MCF 10A (cell line): ENCODE measurements at regions of chr1 and their contacts with region 1.

Region 1: DNA sequence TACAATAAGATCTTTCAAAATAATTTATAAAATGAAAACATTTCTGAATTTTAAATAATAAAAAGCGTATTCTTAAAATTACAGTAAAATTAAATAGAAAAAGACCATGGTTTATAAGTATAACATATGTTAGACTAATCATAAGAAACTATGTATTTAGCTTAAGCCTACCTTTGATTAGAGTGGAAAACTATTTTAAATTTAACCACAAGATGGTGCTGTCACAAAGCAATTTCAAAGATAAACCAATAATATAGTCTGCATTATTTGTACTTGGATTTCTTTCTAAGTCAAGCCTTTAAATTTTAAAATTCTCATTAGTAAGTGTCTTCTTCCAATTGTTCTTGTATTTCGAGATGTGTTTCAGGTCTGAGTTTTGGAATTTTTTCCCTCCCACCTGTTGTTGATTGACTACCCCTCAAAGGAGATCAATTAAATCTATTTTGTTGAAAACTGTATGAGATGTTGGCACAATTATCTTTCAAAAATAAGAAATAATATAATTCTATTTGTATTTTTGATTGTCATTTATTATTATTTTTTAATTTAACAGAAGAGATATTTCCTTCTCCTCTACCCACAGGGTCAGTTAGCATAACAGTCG is 459.8 kb downstream of the KCNT2 start:
- DNase-seq: peak; percentile 69
- H3K4me3 Mint-ChIP-seq: no peak overlapping the region
- H3K27ac Mint-ChIP-seq: no peak overlapping the region
- H3K4me1 Mint-ChIP-seq: no peaks in the 10 kb centered on the region
- H3K27me3 Mint-ChIP-seq: no peaks in the 10 kb centered on the region
- CTCF ChIP-seq: peak; percentile 68

Region 2: GRCh38 chr1:196063293-196063692 is 85.2 kb before region 1 on chr1:
- CTCF ChIA-PET with region 1: no interaction called
- POLR2A ChIA-PET with region 1: no interaction called
- intact Hi-C with region 1: no loop called
- DNase-seq: peak; percentile 78
- H3K4me3 Mint-ChIP-seq: no peak overlapping the region
- H3K27ac Mint-ChIP-seq: no peak overlapping the region
- H3K4me1 Mint-ChIP-seq: peaks cover 7% of the 10 kb centered on the region
- H3K27me3 Mint-ChIP-seq: no peaks in the 10 kb centered on the region
- CTCF ChIP-seq: no peak

Region 3: GRCh38 chr1:196160066-196160795 is 11.8 kb after region 1 on chr1:
- CTCF ChIA-PET with region 1: interaction called, 42 read pairs
- POLR2A ChIA-PET with region 1: interaction called, 3 read pairs
- intact Hi-C with region 1: no loop called
- DNase-seq: peak; percentile 95
- H3K4me3 Mint-ChIP-seq: peak overlapping the region; percentile 57
- H3K27ac Mint-ChIP-seq: peak overlapping the region; percentile 89
- H3K4me1 Mint-ChIP-seq: peaks cover 14% of the 10 kb centered on the region
- H3K27me3 Mint-ChIP-seq: no peaks in the 10 kb centered on the region
- CTCF ChIP-seq: no peak

Region 4: DNA sequence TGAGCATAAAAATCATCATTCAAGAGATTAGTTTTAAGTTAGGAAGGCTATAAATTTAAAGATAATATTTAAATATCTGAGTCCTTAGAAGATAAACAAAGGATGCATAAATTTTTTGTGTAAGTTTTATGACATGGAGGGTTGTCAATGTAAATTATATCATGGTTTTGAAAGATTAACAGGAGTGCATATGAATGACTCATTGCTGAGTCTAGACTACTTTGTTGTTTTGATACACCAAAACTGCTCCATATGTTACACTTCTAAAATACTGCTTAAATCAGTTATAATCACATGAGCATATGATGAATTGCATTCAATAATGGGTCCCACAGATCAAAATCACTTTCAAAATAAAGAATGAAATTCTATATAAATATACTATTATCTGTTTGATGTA is 147.3 kb after region 1 on chr1:
- CTCF ChIA-PET with region 1: interaction called, 11 read pairs
- POLR2A ChIA-PET with region 1: no interaction called
- intact Hi-C with region 1: no loop called
- DNase-seq: peak; percentile 17
- H3K4me3 Mint-ChIP-seq: no peak overlapping the region
- H3K27ac Mint-ChIP-seq: no peak overlapping the region
- H3K4me1 Mint-ChIP-seq: peaks cover 7% of the 10 kb centered on the region
- H3K27me3 Mint-ChIP-seq: no peaks in the 10 kb centered on the region
- CTCF ChIP-seq: no peak

Region 5: DNA sequence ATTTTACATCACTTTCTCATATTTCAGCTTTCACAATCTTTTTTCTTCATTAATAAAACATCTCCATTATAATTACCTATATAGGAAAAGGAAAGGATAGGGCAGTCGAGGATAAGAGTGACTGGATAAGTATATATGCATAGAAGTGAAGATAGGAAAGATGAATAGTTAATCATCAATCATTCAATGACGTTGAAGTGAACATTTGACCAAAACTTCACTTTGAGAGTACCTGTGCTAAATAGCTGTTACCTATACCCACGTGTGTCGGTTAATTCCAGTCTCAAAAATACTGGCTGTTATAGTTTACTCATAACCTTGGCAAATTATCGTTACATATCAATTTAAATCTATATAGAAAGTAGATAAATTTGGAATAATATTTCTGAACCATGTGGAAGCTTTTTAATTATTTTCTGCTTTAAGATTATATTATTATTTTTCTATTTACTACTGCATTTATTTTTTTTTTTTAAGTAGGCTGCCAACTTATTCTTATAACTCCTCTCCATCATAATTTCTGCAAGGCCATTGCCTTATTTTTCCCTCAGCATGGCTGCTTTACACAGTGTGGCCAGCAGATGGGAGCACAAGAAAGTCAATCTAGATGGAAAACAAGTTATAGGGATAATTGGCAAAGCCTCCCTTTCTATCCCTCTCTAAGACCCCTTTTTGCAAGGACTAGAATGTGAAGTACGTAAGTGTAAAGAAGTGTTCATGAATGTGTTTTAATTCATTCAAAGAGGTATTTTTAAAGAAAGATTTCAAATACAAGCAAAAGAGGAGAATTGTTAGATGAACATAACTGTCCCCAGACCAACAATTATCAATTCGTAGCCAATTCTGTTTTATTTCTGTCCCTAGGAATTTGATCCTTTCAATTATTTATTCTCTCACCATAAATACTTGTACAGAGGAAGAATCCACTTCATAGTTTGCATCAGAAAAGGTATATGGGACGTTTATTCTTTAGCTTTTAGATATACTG is 169.4 kb after region 1 on chr1:
- CTCF ChIA-PET with region 1: interaction called, 173 read pairs
- POLR2A ChIA-PET with region 1: interaction called, 5 read pairs
- intact Hi-C with region 1: no loop called
- DNase-seq: peak; percentile 70
- H3K4me3 Mint-ChIP-seq: no peak overlapping the region
- H3K27ac Mint-ChIP-seq: no peak overlapping the region
- H3K4me1 Mint-ChIP-seq: peaks cover 6% of the 10 kb centered on the region
- H3K27me3 Mint-ChIP-seq: no peaks in the 10 kb centered on the region
- CTCF ChIP-seq: peak; percentile 88